GM13977 (cell line): ENCODE measurements at regions of chr15 and their contacts with region 1.

Region 1: DNA sequence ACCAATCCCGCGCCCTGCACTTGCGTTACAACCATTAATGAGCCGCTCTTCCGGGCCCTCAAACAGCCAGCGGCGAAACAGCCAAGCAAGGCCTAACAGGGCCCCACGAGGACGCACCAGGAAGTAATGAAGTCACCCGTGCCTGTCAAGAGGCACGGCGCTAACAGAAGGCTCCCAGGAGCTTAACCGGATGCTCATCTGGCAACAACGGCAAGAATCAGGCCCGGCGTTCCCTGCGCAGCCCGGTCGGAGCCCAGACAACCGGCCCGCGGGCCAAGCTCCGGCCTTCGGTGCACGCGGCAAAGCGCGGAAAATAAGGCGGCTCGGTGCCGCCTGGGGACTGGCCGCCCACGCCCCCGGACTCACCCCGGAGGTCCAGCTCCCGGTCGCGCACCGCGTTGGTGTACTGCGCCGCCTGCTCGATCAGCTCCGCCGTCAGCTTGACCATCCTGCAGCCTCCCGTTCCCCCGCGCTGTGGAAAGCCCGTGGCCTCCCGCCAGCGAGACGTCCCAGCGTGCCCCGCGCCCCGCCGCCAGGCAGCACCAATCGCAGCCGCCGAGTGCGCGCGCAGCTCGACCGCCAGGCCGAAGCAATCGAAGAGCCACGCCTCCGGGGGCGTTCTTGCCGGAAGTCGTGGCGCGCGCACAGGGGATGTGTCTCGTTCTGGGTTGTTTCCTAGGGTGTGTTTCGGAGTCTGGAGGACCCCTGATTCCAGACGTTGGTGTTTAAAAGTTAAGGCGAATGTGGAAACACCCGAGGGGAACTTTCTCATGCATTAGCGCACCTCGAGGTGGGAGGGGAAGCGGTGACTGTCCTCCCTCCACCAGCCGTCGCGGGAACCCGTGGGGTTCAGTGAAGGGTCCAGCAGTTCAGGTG is at the start of gene SNRPA1:
- DNase-seq: peak; percentile 97
- CTCF ChIP-seq: no peak

Region 2: DNA sequence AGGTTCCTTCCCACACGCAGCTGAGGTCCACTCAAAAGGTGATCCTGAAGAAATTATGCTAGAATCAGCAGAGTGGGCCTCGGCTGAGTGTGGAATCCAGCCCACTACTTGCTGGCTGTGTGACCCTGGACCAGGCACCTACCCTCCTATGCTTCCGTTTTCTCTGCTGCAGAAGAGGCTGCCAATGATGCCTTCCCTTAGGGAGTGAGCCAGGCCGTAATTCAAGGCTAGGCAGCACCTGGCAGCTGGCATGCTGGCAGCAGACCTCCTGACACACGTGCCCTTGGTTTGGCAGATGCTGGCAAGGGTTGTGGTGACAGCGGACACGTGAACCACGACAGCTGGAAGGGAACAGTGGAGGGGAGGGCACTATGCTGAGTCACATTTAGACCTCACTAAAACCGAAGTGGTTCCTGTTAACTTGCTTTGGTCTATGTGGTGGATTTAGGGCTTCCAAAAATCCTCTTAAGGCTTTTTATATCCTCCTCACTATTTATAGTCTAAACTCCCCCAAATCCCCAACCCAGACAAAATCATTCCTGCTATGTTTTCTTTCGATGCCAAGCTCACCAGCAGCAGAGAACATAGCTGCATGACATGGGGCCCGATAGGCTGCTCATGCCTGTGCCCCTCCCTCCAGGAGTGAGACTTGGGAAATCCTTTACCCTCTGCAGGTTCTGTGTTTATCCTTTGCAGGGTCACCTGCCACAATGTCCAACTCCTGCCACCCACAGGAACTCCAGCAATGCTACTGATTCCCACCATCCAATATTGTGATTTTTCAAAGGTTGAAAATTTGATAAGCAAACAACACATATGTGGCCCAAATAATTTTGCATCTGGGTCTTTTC is 205.1 kb after region 1 on chr15:
- in situ Hi-C with region 1: loop called (anchors 10 kb)
- DNase-seq: peak; percentile 33
- CTCF ChIP-seq: no peak

Region 3: DNA sequence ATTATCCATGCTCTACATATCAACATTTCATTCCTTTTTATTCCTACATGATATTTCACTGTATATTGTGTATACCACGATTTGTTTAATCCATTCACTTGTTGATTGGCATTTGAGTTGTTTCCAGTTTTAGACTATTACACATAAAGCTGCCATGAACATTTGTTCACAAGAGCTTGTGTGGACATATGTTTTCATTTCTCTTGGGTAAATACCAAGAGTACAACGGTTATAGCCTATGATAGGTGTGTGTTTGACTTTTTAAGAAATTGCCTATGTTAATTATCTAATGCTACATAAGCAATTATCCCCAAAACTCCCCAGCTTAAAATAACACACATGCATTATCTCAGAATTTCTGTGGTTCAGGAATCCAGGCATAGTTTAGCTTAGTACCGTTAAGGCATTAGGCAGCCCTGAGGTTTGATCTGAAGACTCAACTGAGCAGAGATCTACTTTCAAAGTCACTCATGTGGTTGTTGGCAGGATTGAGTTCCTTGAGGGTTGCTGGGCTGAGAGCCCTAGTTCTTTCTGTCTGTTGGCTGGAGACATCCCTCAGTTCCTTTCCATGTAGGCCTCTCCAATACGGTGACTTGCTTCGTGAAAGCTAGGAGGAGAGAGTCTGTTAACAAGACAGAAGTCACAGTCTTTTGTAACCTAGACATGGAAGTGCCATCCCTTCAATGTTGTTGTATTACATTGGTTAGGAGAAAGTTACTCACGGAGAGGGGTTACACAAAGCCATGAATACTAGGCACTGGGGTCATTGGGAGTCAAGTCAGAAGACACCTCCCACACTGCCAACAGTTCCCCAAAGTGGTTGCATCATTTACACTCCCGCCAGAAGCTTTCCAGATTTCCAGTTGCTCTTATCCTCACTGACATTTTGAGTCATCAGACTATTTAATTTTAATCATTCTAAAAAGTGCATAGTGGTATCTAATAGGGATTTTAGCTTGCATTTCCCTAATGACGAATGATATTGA is 215.5 kb after region 1 on chr15:
- in situ Hi-C with region 1: no loop called
- DNase-seq: no peak
- CTCF ChIP-seq: no peak

Region 4: DNA sequence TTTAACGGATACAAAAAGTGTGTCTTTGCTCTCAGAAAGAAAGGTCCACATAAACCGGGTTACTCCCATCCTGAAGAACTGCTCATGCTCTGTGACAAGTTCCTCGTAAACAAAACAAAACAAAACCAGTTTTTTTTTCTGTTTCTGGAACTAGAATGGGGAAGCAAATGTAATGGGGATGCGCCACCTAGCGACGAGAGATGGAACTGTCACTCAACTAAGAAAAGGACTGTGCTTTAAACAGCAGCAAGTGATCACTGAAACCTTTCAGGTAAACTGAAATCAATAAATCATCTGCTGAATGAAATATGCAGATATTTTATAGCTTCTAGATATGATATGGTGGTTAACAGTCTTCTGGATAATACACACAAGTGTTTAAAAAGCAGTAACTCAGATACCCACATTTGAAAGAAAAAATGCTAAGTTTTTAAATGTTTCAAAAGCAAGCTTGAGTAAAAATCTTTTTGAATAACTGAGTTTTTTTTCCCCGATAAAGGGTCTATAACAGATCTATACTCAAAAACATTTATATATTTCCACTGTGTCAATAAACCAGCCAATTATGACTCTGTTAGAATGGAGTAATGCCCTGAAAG is 346.3 kb after region 1 on chr15:
- in situ Hi-C with region 1: loop called (anchors 5 kb)
- DNase-seq: peak; percentile 71
- CTCF ChIP-seq: peak; percentile 88